ENCODE measurements at regions of chr3 and their contacts with region 1.

Region 1: GRCh38 chr3:58305882-58306711 is at the starts of genes HTD2 and RPP14:
- DNase-seq: peak; percentile 93
- H3K4me3 ChIP-seq: peak within 1 kb of the TSS; percentile 89
- H3K27ac ChIP-seq: peak within 1 kb of the TSS; percentile 98
- H3K27me3 ChIP-seq: peaks cover 4% of the 10 kb centered on the region
- CTCF ChIP-seq: peak; percentile 98
- polyA plus RNA-seq, gene HTD2: 7.1 and 9.6 TPM in 2 replicates
- polyA plus RNA-seq, gene RPP14: 14.7 and 18.5 TPM in 2 replicates

Region 2: GRCh38 chr3:58177747-58178527 is 128.2 kb before region 1 on chr3:
- CTCF ChIA-PET with region 1: interaction called, 37 read pairs
- POLR2A ChIA-PET with region 1: interaction called, 3 read pairs
- DNase-seq: peak; percentile 48
- H3K4me3 ChIP-seq: peak overlapping the region; percentile 49
- H3K27ac ChIP-seq: no peak overlapping the region
- H3K27me3 ChIP-seq: no peaks in the 10 kb centered on the region
- CTCF ChIP-seq: peak; percentile 89

Region 3: DNA sequence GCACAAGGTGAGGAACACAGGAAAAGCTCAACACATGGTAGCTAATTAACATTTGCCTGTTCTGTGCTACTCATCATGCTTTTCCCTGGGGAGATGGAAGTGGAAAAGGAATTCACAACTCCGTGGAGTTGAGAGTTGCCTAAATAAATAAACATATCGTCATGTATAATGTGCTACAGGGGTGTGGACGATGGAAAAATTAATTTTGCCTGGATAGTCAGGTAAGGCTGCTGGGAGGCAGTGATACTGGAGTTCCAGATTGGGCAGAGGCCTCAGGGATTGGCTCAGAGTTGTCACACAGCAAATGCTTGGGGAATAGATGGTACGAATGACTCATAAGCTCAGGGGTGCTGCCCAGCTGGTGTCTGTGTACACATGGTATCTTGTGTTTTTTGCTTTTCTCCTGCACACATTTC is 71.6 kb before region 1 on chr3:
- CTCF ChIA-PET with region 1: interaction called, 10 read pairs
- POLR2A ChIA-PET with region 1: no interaction called
- DNase-seq: peak; percentile 21
- H3K4me3 ChIP-seq: no peak overlapping the region
- H3K27ac ChIP-seq: no peak overlapping the region
- H3K27me3 ChIP-seq: peaks cover 5% of the 10 kb centered on the region
- CTCF ChIP-seq: no peak

Region 4: DNA sequence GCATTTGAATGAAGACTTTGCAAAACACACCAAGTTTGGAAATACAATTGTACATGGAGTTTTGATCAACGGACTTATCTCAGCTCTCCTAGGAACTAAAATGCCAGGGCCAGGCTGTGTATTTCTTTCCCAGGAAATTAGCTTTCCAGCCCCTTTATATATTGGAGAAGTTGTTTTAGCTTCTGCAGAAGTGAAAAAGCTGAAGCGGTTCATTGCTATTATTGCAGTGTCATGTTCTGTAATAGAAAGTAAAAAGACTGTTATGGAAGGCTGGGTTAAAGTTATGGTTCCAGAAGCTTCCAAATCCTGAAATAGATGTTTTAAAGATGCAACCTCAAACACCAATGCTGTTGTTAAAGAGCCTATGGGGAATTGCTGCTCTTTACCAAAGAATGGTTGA is 11.7 kb after region 1 on chr3:
- CTCF ChIA-PET with region 1: interaction called, 31 read pairs
- POLR2A ChIA-PET with region 1: interaction called, 4 read pairs
- DNase-seq: no peak
- H3K4me3 ChIP-seq: no peak overlapping the region
- H3K27ac ChIP-seq: no peak overlapping the region
- H3K27me3 ChIP-seq: no peaks in the 10 kb centered on the region
- CTCF ChIP-seq: no peak

Region 5: DNA sequence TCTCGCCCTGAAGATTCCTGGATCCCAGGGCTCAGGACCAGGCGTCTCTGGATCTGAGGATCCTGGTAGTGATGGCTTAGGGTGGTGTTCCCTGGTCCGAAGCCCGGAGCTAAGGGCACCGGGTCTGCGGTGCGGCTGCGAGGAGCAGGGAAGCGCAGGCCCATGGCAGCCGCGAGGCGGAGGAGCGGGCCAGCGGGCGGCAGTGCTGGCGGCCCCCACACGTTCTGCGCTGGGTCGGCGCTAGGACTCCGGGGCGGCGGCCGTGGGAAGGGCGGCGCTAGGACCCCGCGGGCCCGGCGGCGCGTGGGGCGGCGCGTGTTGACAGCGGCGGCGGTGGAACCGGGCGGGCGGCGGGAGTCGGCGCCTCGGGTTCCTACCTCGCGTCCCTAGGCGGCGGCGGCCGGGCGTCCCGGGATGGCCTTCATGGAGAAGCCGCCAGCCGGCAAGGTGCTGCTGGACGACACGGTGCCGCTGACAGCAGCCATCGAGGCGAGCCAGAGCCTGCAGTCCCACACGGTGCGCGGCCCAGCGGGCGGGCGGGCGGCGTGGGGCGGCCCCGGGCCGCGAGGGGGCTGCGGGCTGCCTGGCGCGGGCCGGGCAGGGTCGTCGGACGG is 26.6 kb after region 1 on chr3 and contains the start of gene PXK:
- CTCF ChIA-PET with region 1: interaction called, 13 read pairs
- POLR2A ChIA-PET with region 1: no interaction called
- DNase-seq: no peak
- H3K4me3 ChIP-seq: peak within 1 kb of the TSS; percentile 84
- H3K27ac ChIP-seq: peak within 1 kb of the TSS; percentile 60
- H3K27me3 ChIP-seq: no peaks in the 10 kb centered on the region
- CTCF ChIP-seq: peak; percentile 18; the same call in 1 of the 2 replicates
- polyA plus RNA-seq, gene PXK: 56.6 and 70.3 TPM in 2 replicates

Region 6: DNA sequence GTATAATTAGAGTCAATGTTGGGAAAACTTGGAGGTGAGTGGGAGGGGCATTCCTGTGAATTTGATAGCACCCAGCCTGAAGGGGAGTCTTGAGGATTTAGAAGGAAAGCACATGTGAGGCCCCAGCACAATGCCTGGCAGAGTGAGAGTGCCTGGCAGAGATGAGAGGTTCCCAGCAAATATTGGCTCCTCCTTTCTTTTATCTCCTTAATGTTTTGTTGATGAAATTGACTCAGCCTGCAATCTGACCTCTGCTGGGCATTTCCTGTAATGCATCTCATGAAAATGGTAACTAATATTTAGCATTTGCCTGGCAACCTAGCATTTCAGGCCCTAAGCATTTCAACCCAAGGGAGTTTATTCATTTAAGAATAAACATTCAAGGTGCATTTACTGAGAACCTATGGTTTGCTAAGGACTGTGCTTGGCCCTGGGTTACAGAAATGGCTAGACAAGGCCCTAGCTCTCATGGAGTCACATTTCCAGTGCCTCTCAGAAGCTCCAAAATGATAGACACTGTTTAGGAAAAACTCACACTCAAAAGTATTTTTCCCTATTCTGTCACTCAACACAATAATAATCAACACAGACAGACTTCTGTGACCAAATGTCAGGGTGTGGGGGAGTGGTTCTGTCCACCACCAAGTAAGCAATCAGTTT is 108.6 kb after region 1 on chr3:
- CTCF ChIA-PET with region 1: interaction called, 38 read pairs
- POLR2A ChIA-PET with region 1: no interaction called
- DNase-seq: no peak
- H3K4me3 ChIP-seq: no peak overlapping the region
- H3K27ac ChIP-seq: no peak overlapping the region
- H3K27me3 ChIP-seq: no peaks in the 10 kb centered on the region
- CTCF ChIP-seq: peak; percentile 83

Region 7: GRCh38 chr3:58630076-58630709 is 324.1 kb after region 1 on chr3:
- CTCF ChIA-PET with region 1: interaction called, 21 read pairs
- POLR2A ChIA-PET with region 1: no interaction called
- DNase-seq: no peak
- H3K4me3 ChIP-seq: no peak overlapping the region
- H3K27ac ChIP-seq: no peak overlapping the region
- H3K27me3 ChIP-seq: no peaks in the 10 kb centered on the region
- CTCF ChIP-seq: peak; percentile 83